Endothelial cell of umbilical vein (primary cell): ENCODE measurements at regions of chr4 and their contacts with region 1.

Region 1: DNA sequence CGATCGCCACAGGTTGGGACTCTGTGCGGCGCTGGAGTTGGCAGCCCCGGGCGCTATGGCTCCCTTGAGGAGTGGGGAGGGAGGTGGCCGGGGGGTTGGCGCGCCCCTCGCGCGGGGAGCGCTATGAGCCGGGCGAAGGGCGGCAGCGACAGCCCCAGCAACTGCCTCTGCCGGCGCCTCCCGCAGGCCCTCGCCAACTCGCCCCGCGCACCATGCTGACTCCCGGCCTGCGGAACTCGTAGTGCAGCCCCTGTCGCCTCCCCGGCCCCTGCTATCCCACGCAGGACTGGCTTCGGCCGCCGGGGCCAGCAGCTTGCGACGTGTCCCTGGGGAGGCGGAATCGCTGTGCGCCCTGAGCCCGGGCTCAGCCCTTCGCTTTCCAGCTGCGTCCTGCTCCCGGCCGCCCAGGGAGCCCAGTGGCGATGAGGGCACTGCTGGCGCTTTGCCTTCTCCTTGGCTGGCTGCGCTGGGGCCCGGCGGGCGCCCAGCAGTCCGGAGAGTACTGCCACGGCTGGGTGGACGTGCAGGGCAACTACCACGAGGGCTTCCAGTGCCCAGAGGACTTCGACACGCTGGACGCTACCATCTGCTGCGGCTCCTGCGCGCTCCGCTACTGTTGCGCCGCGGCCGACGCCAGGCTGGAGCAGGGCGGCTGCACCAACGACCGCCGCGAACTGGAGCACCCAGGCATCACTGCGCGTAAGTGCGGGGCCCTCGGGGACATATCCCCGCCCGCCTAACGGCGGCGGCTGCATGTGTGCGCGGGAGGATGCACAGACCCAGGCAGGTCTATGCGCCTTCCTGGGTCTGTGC is 553 bp downstream of the SHISA3 start:
- DNase-seq: peak; percentile 56
- H3K4me3 ChIP-seq: peak overlapping the region; percentile 55 to 78 (median 75)
- H3K27ac ChIP-seq: peak overlapping the region; percentile 26
- H3K4me1 ChIP-seq: peaks cover 14% of the 10 kb centered on the region
- H3K27me3 ChIP-seq: no peaks in the 10 kb centered on the region
- CTCF ChIP-seq: no peak
- POLR2A ChIP-seq: no peak

Region 2: DNA sequence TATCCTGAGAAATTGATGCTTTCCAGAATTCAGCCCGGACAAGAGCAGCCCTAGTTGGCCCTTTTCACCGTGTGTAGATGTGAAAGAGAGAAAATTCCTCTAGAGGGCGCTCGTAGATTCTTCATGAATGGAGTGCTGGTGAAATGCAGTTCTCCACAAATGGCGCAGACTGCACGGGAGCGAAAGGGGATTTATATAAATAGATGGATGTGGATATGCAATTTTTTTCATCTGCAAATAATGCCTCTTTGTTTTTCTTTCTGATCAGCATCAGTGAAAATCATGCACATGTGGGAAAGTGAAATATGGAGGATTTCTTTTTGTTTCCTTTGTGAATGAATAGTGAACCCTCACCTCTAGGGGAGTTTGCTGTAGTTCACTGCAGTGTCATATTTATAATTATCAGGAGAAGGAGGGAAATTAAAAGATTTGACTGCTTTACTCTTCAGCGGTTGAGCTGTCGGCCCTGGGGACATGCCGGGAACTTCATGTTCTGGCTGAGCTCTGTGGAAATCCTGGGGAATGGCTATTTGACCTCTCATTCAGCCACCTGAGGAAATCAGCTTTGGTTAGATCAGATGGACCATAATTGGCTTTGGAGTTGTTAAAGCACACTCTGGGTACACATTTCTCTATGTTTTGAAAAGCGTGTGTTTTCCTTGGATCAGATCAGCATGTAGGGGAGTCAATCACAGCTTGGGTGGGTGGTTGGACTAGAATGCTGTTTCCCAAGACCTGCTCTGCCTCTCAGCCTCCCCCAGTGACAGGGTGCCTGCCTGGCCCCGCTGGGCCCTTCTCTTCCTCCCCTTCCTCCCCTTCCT is 115.5 kb before region 1 on chr4:
- CTCF ChIA-PET with region 1: interaction called, 3 read pairs
- POLR2A ChIA-PET with region 1: no interaction called
- dilution Hi-C with region 1: no loop called
- intact Hi-C with region 1: loop called (anchors 1 kb)
- DNase-seq: peak; percentile 71
- H3K4me3 ChIP-seq: no peak overlapping the region
- H3K27ac ChIP-seq: no peak overlapping the region
- H3K4me1 ChIP-seq: peaks cover 3% of the 10 kb centered on the region
- H3K27me3 ChIP-seq: peaks cover 0 to 4% of the 10 kb centered on the region in 2 experiments
- CTCF ChIP-seq: peak; percentile 56 to 71
- POLR2A ChIP-seq: no peak

Region 3: GRCh38 chr4:42339935-42340406 is 57.9 kb before region 1 on chr4:
- CTCF ChIA-PET with region 1: interaction called, 9 read pairs
- POLR2A ChIA-PET with region 1: no interaction called
- dilution Hi-C with region 1: no loop called
- intact Hi-C with region 1: loop called (anchors 1 kb)
- DNase-seq: peak; percentile 88
- H3K4me3 ChIP-seq: peak overlapping the region in 1 of 3 experiments; percentile 9
- H3K27ac ChIP-seq: peak overlapping the region; percentile 94
- H3K4me1 ChIP-seq: peaks cover 25% of the 10 kb centered on the region
- H3K27me3 ChIP-seq: no peaks in the 10 kb centered on the region
- CTCF ChIP-seq: no peak
- POLR2A ChIP-seq: peak; percentile 57

Region 4: DNA sequence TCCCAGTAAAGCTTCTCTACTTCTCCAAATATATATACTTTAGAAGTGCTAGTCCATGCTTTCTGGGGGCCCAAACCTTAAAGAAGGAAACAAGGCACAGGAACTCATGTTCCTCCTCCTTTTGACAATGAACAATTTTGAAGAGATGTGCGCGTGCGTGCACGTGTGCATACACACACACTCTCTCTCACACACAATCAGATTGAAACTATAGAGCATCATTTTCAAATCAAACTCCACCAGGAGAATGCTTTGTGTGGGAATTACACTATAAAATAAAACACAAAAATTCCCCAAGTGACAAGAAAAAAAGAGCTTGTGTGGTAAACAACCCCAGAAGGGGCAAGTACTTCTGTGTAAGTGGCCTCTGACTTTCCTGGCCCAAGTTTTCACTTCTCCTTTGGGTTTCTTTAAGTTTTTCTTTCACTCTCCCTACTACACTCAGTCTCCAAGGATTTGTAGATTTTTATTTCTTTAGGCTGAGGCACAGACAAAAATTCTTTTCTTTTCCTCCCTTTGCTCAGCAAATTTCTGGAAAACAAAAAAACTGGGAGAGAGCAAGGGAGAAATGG is 47.1 kb before region 1 on chr4:
- CTCF ChIA-PET with region 1: no interaction called
- POLR2A ChIA-PET with region 1: no interaction called
- dilution Hi-C with region 1: no loop called
- intact Hi-C with region 1: no loop called
- DNase-seq: no peak
- H3K4me3 ChIP-seq: no peak overlapping the region
- H3K27ac ChIP-seq: no peak overlapping the region
- H3K4me1 ChIP-seq: no peaks in the 10 kb centered on the region
- H3K27me3 ChIP-seq: no peaks in the 10 kb centered on the region
- CTCF ChIP-seq: no peak
- POLR2A ChIP-seq: no peak

Region 5: GRCh38 chr4:42412251-42412650 is 14.4 kb after region 1 on chr4:
- CTCF ChIA-PET with region 1: interaction called, 5 read pairs
- POLR2A ChIA-PET with region 1: no interaction called
- dilution Hi-C with region 1: no loop called
- intact Hi-C with region 1: loop called (anchors 1 kb)
- DNase-seq: peak; percentile 89
- H3K4me3 ChIP-seq: no peak overlapping the region
- H3K27ac ChIP-seq: peak overlapping the region; percentile 80
- H3K4me1 ChIP-seq: peaks cover 33% of the 10 kb centered on the region
- H3K27me3 ChIP-seq: no peaks in the 10 kb centered on the region
- CTCF ChIP-seq: no peak
- POLR2A ChIP-seq: no peak

Region 6: DNA sequence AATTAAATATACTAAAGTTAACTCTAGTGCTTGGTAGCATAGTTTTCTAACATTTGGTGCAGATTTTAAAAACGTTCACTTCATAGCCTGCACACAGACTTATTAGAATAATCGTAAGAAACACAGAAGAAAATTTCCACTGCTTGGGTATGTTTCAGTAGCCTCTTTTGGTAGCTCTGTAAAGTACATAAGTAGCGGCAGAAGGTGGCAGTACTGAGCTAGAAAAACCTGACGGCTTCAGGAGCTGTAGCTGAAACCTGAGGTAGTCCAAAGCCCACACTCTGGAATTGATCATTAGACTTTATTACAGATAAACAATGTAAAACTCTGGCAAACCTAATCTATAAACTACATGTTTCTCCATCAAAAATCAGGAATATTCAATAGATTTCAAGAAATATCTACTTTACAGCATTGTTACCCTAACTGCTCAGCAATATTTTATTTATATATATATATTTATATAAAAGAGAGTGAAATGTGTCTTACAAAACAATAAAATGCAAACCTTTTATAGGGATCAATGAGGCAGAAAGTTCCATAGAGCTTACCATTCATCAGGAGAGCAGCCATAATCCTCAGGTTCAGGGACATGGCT is 170.9 kb after region 1 on chr4:
- CTCF ChIA-PET with region 1: no interaction called
- POLR2A ChIA-PET with region 1: no interaction called
- dilution Hi-C with region 1: no loop called
- intact Hi-C with region 1: no loop called
- DNase-seq: peak; percentile 65
- H3K4me3 ChIP-seq: no peak overlapping the region
- H3K27ac ChIP-seq: no peak overlapping the region
- H3K4me1 ChIP-seq: no peaks in the 10 kb centered on the region
- H3K27me3 ChIP-seq: peaks cover 0 to 2% of the 10 kb centered on the region in 2 experiments
- CTCF ChIP-seq: peak; percentile 54 to 63
- POLR2A ChIP-seq: no peak

Region 7: GRCh38 chr4:42656944-42657792 is 259.3 kb after region 1 on chr4 and contains the start of gene ATP8A1:
- CTCF ChIA-PET with region 1: no interaction called
- POLR2A ChIA-PET with region 1: no interaction called
- dilution Hi-C with region 1: no loop called
- intact Hi-C with region 1: loop called (anchors 5 kb)
- DNase-seq: peak; percentile 89
- H3K4me3 ChIP-seq: peak within 1 kb of the TSS; percentile 12 to 48 (median 47)
- H3K27ac ChIP-seq: peak within 1 kb of the TSS; percentile 81
- H3K4me1 ChIP-seq: peaks cover 26% of the 10 kb centered on the region
- H3K27me3 ChIP-seq: peaks cover 2 to 16% of the 10 kb centered on the region in 2 experiments
- CTCF ChIP-seq: no peak
- POLR2A ChIP-seq: peak; percentile 45
- total RNA-seq, gene ATP8A1: 1.9 and 11.5 TPM in 2 replicates

Region 8: DNA sequence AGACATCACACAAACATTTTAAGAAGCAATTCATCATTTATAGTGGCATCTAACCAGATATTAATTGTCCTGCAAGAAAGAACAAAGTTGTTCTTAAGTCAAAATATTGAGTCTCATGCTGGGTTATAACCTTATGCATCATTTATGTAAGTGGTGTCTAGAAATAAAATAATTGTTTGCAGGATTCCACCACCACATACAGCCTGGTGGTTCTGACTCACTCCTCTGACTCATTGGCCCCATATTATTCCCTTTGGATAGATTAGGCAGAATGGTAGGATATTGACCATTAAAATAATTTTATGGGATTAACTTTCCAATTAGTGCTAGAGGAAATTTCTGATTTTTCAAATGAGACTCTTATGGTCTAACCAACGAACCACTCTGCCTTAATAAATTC is 879.2 kb after region 1 on chr4:
- CTCF ChIA-PET with region 1: no interaction called
- POLR2A ChIA-PET with region 1: no interaction called
- dilution Hi-C with region 1: no loop called
- intact Hi-C with region 1: no loop called
- DNase-seq: no peak
- H3K4me3 ChIP-seq: no peak overlapping the region
- H3K27ac ChIP-seq: no peak overlapping the region
- H3K4me1 ChIP-seq: no peaks in the 10 kb centered on the region
- H3K27me3 ChIP-seq: no peaks in the 10 kb centered on the region
- CTCF ChIP-seq: no peak
- POLR2A ChIP-seq: no peak